Sigmoid colon (tissue), 7 donors: ENCODE measurements at regions of chr17 and their contacts with region 1.

Region 1: DNA sequence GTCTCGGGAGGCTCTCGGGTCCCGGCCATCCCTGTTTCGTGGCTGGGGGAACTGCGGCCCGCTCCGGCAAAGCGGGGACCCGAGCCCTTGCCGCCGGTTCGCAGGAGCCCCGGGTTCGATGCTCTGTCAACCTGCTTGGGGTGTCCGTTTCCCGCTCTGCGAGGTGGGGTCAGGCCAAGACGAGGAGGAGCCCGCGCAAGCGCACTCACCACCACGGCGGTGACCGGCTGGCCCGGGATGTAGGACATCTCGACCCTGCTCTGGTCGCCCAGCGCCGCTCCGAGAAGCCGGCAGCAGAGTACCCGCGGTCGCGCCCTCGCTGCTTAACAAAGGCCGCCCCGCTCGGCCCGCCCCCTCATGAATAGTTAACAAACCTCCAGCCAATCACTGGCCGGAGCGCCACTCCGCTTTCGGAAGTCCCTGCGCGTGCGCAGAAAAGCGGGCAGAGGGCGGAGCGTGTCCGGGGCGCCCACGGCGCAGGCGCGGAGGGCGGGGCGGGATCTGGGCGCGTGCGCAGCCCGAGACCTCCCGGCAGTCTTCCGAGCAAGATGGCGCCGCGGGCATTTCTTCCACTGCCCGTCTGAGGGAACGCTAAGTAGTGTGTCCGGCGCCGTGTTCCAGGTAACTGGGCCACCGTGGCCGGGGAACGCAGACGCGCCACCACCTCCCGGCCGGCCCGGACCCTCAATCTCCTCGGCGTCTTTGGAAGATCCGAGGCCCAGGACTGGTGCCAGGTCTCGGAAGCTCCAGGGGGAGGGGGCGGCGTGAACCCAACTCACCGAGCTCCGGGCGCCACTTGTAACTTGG is at the starts of genes EMC6 and TAX1BP3:
- DNase-seq: peak; percentile 99
- H3K4me3 ChIP-seq: peak within 1 kb of the TSS; percentile 91 to 97 (median 96)
- H3K27ac ChIP-seq: peak within 1 kb of the TSS; percentile 94 to 98 (median 98)
- H3K4me1 ChIP-seq: peaks cover 0 to 43% (median 40%) of the 10 kb centered on the region in 4 donors
- H3K27me3 ChIP-seq: no peaks in the 10 kb centered on the region
- CTCF ChIP-seq: no peak
- EP300 ChIP-seq: no peak
- POLR2A ChIP-seq: peak; percentile 92 to 93
- total RNA-seq, gene EMC6: 4.4 to 21.7 (median 15.1) TPM
- total RNA-seq, gene TAX1BP3: 58.1 to 92.0 (median 63.5) TPM

Region 2: GRCh38 chr17:3048767-3049471 is 619.6 kb before region 1 on chr17:
- intact Hi-C with region 1: loop called (anchors 10 kb)
- DNase-seq: peak; percentile 98
- H3K4me3 ChIP-seq: peak overlapping the region; percentile 59 to 80 (median 76)
- H3K27ac ChIP-seq: peak overlapping the region; percentile 71 to 80 (median 78)
- H3K4me1 ChIP-seq: peaks cover 0 to 12% (median 8%) of the 10 kb centered on the region in 4 donors
- H3K27me3 ChIP-seq: no peaks in the 10 kb centered on the region
- CTCF ChIP-seq: peak; percentile 31 to 60 (median 51)
- EP300 ChIP-seq: no peak
- POLR2A ChIP-seq: peak in 1 of 2 donors; percentile 20

Region 3: DNA sequence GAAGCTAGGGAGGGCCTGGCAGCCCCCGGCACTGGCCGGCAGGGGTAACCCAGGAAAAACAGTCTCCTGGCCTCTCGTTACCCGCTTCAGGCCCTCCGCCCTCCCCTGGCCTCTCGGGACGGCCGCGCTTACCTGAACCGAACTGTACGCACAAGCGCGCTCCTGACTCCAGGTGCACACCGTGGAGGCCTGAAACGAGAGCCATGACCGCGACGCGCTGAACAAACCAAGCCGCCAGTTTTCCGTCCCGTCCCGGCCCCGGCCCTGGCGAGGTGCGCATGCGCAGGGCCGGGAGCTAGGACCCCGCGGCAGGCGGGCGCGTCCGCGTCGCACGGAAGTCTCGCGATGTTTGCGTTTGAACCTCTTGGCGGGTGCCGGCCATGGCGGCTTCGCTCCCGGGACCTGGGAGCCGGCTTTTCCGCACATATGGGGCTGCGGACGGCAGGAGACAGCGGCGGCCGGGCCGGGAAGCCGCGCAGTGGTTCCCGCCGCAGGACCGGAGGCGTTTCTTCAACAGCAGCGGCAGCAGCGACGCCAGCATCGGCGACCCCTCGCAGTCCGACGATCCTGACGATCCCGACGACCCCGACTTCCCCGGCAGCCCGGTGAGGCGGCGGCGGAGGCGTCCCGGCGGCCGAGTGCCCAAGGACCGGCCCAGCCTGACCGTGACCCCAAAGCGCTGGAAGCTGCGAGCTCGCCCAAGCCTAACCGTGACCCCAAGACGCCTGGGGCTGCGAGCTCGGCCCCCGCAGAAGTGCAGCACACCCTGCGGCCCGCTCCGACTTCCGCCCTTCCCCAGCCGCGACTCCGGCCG is 55.3 kb after region 1 on chr17 and contains the start of gene HASPIN:
- intact Hi-C with region 1: loop called (anchors 5 kb)
- DNase-seq: peak; percentile 93
- H3K4me3 ChIP-seq: peak within 1 kb of the TSS; percentile 70 to 90 (median 76)
- H3K27ac ChIP-seq: peak within 1 kb of the TSS; percentile 87 to 90 (median 88)
- H3K4me1 ChIP-seq: peaks cover 0 to 37% (median 27%) of the 10 kb centered on the region in 4 donors
- H3K27me3 ChIP-seq: no peaks in the 10 kb centered on the region
- CTCF ChIP-seq: peak in 3 of 4 experiments; percentile 3 to 43 (median 34)
- EP300 ChIP-seq: no peak
- POLR2A ChIP-seq: peak; percentile 14 to 62
- total RNA-seq, gene HASPIN: under 0.01 to 0.83 (median 0.29) TPM

Region 4: GRCh38 chr17:3965118-3965803 is 296.8 kb after region 1 on chr17:
- intact Hi-C with region 1: no loop called
- DNase-seq: no peak
- H3K4me3 ChIP-seq: peak overlapping the region in 3 of 4 donors; percentile 33 to 55 (median 44)
- H3K27ac ChIP-seq: peak overlapping the region; percentile 44 to 67 (median 50)
- H3K4me1 ChIP-seq: peaks cover 0 to 30% (median 17%) of the 10 kb centered on the region in 4 donors
- H3K27me3 ChIP-seq: peaks cover 21 to 58% (median 40%) of the 10 kb centered on the region in 3 donors
- CTCF ChIP-seq: no peak
- EP300 ChIP-seq: no peak
- POLR2A ChIP-seq: peak in 1 of 2 donors; percentile 53